Activated T-helper 1 cell treated with anti-CD3 and anti-CD28 coated beads, Interleukin-12 subunit alpha, Interleukin-12 subunit beta, Interleukin-2, Interleukin-4 antibody, amounts not matched to agents 30 ng/mL and 10 ng/mL and 1 ng/mL, durations not matched to agents 14 hours and 24 hours and 36 hours (primary cell): ENCODE measurements at regions of chr11 and their contacts with region 1.

Region 1: GRCh38 chr11:44318369-44318768 is 8.4 kb upstream of the ALX4 start:
- DNase-seq: no peak
- H3K4me3 Mint-ChIP-seq: no peak overlapping the region
- H3K27ac Mint-ChIP-seq: no peak overlapping the region
- H3K4me1 Mint-ChIP-seq: no peaks in the 10 kb centered on the region
- H3K27me3 Mint-ChIP-seq: peaks cover 88% of the 10 kb centered on the region

Region 2: DNA sequence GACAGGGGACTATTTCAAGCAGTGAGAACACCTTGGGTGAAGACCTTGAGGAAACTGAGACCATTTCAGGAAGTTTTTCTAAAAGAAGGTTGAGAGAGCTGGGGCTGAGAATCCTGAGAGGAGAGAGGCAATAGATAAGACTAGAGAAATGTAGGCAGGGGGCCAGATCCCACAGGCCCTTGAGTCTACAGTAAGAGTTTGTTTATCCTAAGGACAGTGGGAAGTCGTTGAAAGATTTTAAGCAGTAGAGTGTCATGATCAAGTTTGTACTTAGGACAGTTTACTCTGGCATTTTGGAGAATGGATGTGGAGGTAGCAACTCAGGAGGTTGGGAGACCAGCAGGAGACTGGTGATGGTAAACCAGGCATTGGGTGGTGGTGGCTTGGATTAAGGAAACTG is 620.7 kb before region 1 on chr11:
- intact Hi-C with region 1: no loop called
- DNase-seq: no peak
- H3K4me3 Mint-ChIP-seq: no peak overlapping the region
- H3K27ac Mint-ChIP-seq: no peak overlapping the region
- H3K4me1 Mint-ChIP-seq: no peaks in the 10 kb centered on the region
- H3K27me3 Mint-ChIP-seq: no peaks in the 10 kb centered on the region

Region 3: DNA sequence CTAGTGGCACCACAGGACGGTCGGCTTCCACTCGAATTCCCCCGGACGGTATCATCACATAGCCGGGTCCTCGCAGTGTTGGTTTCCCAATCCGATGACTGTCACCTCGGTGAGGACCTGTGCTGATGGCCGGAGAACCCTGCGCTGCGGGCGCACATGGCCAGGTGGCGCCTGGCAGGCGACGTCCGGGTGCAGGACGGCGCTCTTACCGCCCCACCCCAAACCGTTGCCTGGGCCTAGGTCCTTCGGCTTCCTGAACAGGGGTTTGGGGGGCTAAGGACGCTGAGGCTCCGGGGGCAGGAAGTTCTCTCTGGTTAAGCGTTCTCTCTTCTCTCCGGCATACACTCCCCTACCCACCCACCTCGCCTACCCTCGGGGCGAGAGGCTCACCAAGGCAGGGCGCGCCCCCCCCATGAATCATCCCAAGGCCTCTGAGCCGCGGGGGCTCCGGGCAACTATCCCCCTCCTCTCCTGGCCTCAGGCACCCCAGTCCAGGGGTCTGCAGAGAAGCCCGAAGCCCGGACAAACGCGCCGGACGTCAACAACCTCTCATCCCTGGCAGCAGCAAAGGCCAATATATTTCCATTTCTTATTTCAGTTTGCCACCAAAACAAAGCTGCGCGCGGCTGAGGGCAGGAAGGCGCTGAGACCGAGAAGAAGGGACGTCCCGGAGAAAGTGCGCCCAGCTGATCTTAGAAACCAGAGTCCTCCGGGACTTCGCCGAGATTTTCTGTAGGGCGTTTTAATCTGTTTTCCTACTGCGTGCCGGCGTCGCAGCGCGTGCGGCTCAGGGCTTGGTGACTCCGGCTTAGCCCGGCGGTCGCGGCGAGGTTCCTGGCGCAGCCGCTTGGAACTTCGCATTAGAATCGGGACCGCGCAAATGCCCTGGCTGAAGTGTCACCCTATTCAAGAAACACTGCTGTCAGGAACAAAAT is 14.0 kb before region 1 on chr11:
- intact Hi-C with region 1: loop called (anchors 1 kb)
- DNase-seq: no peak
- H3K4me3 Mint-ChIP-seq: peak overlapping the region; percentile 84
- H3K27ac Mint-ChIP-seq: peak overlapping the region; percentile 40
- H3K4me1 Mint-ChIP-seq: peaks cover 20% of the 10 kb centered on the region
- H3K27me3 Mint-ChIP-seq: peaks cover 78% of the 10 kb centered on the region